GM12878 (cell line): ENCODE measurements at regions of chr7 and their contacts with region 1.

Region 1: GRCh38 chr7:107898997-107899594 is 8.1 kb downstream of the DLD start:
- DNase-seq: no peak
- ATAC-seq: peak; percentile 56
- H3K4me3 ChIP-seq: no peak overlapping the region
- H3K27ac ChIP-seq: no peak overlapping the region
- H3K4me1 ChIP-seq: no peaks in the 10 kb centered on the region
- H3K27me3 ChIP-seq: no peaks in the 10 kb centered on the region
- CTCF ChIP-seq: no peak
- EP300 ChIP-seq: no peak
- POLR2A ChIP-seq: no peak
- RAD21 ChIP-seq: no peak

Region 2: DNA sequence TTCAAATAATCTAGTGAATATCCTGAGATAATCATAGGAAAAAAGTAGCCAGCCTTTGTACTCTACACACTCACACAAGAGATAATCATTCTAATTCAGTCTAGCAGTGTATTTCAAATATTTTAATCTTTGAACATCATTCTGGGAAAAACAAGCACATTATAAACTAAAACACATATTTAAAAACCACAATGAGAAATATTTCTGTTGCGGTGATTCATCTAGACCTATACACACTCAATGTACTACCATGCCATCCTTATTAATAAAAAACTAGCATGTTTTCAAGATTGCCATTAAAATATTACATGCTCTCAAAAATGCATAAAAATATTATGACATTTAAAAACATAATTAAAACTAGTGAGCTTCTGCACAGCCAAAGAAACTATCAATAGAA is 347.2 kb before region 1 on chr7:
- CTCF ChIA-PET with region 1: no interaction called
- POLR2A ChIA-PET with region 1: no interaction called
- RAD21 ChIA-PET with region 1: no interaction called
- SMC1A ChIA-PET with region 1: no interaction called
- in situ Hi-C with region 1: no loop called
- intact Hi-C with region 1: no loop called
- DNase-seq: no peak
- ATAC-seq: no peak
- H3K4me3 ChIP-seq: no peak overlapping the region
- H3K27ac ChIP-seq: no peak overlapping the region
- H3K4me1 ChIP-seq: no peaks in the 10 kb centered on the region
- H3K27me3 ChIP-seq: no peaks in the 10 kb centered on the region
- CTCF ChIP-seq: no peak
- EP300 ChIP-seq: no peak
- POLR2A ChIP-seq: no peak
- RAD21 ChIP-seq: no peak

Region 3: DNA sequence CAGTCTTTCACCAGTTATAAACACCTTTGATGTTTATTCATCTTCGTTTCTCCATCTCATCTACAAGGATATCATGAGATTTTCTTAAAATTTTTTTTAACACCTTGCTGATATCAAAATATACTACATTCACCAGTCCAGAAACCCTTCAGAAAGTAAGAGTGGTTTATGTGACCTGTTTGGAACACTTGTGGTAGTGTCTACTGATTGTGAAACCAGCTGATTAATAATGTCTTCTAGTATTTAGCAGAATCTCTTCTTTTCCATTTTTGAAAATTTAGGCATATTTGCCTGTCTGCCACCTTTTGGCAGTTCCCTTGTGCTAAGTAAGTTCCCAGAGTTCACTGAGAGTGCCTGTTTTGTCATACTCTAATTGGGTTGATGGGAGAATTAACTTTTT is 10.3 kb after region 1 on chr7:
- CTCF ChIA-PET with region 1: interaction called, 3 read pairs
- POLR2A ChIA-PET with region 1: interaction called, 11 read pairs
- RAD21 ChIA-PET with region 1: no interaction called
- SMC1A ChIA-PET with region 1: interaction called, 4 read pairs
- in situ Hi-C with region 1: no loop called
- intact Hi-C with region 1: no loop called
- DNase-seq: no peak
- ATAC-seq: peak; percentile 28; the same call in 1 of the 3 replicates
- H3K4me3 ChIP-seq: no peak overlapping the region
- H3K27ac ChIP-seq: no peak overlapping the region
- H3K4me1 ChIP-seq: no peaks in the 10 kb centered on the region
- H3K27me3 ChIP-seq: no peaks in the 10 kb centered on the region
- CTCF ChIP-seq: no peak
- EP300 ChIP-seq: no peak
- POLR2A ChIP-seq: no peak
- RAD21 ChIP-seq: no peak

Region 4: DNA sequence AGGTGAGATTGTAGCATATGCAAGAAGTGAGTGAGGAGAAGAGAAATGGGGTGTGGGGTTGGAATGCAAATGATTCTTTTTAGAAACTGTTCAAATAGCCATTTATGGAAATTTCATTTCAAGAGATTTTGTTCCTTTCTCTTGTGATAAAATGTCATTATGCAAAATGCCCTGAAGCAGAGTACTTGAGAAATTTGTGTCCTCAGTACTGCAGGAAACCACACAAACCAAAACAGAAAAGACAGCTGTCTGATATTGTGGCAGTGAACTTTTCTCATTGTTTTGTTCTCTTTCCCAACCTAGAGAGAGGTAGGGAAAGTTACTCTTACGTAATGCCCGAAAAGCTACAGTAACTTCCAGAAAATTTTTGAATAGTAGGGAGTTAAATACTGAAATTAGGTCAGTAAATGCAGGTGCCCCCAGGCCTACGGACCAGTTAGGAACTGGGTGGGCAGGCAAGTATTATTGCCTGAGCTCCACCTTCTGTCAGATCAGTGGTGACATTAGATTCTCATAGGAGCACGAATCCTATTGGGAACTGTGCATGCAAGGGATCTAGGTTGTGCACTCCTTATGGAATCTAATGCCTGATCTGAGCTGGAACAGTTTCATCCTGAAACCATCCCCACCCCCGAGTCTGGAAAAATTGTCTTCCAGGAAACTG is 25.9 kb after region 1 on chr7:
- CTCF ChIA-PET with region 1: interaction called, 3 read pairs
- POLR2A ChIA-PET with region 1: interaction called, 3 read pairs
- RAD21 ChIA-PET with region 1: no interaction called
- SMC1A ChIA-PET with region 1: interaction called, 10 read pairs
- in situ Hi-C with region 1: no loop called
- intact Hi-C with region 1: no loop called
- DNase-seq: peak; percentile 51
- ATAC-seq: peak; percentile 89
- H3K4me3 ChIP-seq: no peak overlapping the region
- H3K27ac ChIP-seq: peak overlapping the region; percentile 63
- H3K4me1 ChIP-seq: peaks cover 13% of the 10 kb centered on the region
- H3K27me3 ChIP-seq: no peaks in the 10 kb centered on the region
- CTCF ChIP-seq: no peak
- EP300 ChIP-seq: peak in 1 of 2 experiments; percentile 40; a peak in 1 of 4 replicates
- POLR2A ChIP-seq: no peak
- RAD21 ChIP-seq: no peak